ENCODE measurements at regions of chr7 and their contacts with region 1.

Region 1: DNA sequence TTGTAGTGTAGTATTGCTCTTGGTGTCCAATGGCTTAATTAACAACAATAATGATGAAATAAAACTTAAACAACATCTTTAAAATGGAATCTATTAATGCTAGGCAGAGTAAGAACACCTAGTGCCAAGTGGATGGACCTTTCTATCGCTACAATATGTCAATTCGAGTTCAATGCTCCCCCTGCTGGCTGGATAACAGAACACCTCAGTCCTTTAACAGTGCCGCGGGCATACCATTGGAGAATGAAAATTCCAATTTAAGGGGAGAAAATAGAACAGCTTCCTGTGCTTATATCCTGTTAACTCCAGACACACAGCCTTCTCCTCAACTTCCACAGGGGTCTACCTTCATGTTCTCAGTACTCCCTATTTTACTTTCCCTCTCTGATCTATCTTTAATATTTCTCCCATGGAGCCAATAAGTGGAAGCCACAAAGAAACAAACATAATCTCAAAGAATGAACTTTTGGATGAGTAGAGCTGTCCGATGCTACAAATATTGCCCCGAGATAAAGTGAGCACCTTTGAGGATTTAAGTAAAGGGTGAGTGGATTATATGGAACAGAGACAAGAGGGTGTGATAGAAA is 41.4 kb downstream of the COL1A2 start:
- DNase-seq: peak; percentile 78
- H3K4me3 ChIP-seq: no peak overlapping the region
- CTCF ChIP-seq: peak; percentile 82

Region 2: DNA sequence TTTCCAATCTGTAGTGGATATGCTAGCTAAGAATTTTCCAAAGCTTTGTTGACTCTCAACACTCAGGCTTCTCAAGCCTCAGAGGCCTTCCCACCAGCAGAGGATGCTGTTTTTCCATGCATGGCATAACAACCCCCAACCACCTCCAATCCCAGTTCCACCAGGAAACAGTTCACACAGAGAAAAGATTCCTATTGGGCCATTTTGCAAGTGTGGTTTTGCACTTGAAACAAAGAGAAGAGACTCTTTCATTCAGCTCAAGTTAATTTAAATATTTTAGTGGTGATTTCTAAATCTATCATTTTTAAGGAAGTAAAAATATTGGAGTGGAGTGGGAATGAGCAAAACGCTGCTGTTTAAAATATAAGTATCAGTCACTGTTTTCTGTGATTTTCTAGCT is 147.0 kb before region 1 on chr7:
- in situ Hi-C with region 1: loop called (anchors 10 kb)
- DNase-seq: peak; percentile 87
- H3K4me3 ChIP-seq: no peak overlapping the region
- CTCF ChIP-seq: peak; percentile 100

Region 3: GRCh38 chr7:94529516-94529915 is 93.4 kb after region 1 on chr7:
- in situ Hi-C with region 1: no loop called
- DNase-seq: peak; percentile 40
- H3K4me3 ChIP-seq: no peak overlapping the region
- CTCF ChIP-seq: no peak

Region 4: DNA sequence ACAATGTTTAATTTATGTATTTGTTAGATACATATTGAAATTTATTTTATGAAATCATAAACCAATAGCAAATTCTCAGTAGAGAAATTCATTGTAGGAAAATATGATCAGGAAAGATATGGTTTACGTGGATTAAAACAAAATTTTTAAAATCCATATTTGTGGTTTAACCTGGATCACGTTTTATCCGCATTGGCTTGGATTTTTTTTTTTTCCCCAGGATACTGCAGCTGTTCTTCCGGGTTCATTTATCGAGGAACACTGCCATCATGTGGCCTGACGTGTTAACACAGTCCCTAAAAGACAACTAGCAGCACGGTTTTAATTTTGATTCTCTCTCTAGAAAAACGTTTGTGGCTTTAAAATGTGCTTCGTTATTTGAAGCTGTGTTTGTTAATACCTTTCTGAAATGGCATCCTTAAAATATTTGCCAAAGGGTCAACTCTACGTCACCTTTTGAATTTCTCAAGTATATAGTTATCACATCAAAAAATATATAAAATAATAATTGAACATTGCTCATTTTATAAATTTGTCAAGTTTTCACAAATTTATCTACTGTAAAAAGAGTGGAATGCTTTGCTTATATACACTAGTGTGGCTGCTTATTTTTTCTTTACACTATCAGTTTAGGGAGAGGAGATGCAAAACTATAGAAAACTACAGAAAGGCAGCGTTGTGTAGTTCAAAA is 1040.9 kb after region 1 on chr7:
- in situ Hi-C with region 1: loop called (anchors 25 kb)
- DNase-seq: peak; percentile 72
- H3K4me3 ChIP-seq: no peak overlapping the region
- CTCF ChIP-seq: peak; percentile 71